MCF 10A (cell line): ENCODE measurements at regions of chr1 and their contacts with region 1.

Region 1: DNA sequence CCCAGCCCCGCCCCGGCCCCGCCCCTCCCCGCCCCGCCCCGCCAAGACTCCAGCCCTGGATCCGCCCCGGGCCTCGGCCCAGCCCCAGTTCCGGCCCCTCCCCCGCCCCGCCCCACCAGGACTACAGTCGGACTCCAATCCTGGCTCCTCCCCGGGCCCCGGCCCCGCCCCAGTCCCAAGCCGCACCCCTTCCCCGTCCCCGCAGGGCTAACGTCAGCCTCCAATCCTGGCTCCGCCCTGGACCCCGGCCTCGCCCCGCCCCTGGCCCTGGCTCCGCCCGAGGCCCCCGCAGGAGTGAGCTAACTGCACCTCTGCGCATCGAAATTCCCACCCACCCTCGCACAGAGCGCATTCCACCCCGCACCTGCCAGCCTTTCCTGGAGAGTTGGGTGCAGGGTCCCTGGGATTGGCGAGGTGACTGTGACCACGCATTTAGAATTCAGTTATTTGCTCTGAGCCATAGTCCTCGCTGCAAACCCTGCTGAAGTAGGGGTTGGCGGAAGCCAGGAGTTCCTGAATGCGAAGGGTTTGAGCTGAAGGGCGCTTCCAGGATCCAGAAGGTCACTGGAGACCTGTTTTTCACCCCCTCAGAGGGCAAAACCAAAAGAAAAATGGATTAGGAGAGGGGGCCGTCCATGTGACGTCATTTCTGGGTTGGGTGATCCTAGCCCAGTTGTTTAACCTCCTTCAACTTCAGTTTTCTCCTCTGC is 588 bp upstream of the IGSF8 start:
- DNase-seq: peak; percentile 96
- H3K4me3 Mint-ChIP-seq: peak overlapping the region; percentile 81
- H3K27ac Mint-ChIP-seq: no peak overlapping the region
- H3K4me1 Mint-ChIP-seq: peaks cover 36% of the 10 kb centered on the region
- H3K27me3 Mint-ChIP-seq: no peaks in the 10 kb centered on the region
- CTCF ChIP-seq: no peak

Region 2: GRCh38 chr1:160031365-160032164 is 67.4 kb before region 1 on chr1 and contains the start of gene PIGM:
- CTCF ChIA-PET with region 1: interaction called, 1,546 read pairs
- POLR2A ChIA-PET with region 1: interaction called, 70 read pairs
- intact Hi-C with region 1: no loop called
- DNase-seq: peak; percentile 99
- H3K4me3 Mint-ChIP-seq: peak within 1 kb of the TSS; percentile 80
- H3K27ac Mint-ChIP-seq: peak within 1 kb of the TSS; percentile 60
- H3K4me1 Mint-ChIP-seq: peaks cover 24% of the 10 kb centered on the region
- H3K27me3 Mint-ChIP-seq: no peaks in the 10 kb centered on the region
- CTCF ChIP-seq: no peak
- total RNA-seq, gene PIGM: 7.7 and 10.1 TPM in 2 replicates

Region 3: DNA sequence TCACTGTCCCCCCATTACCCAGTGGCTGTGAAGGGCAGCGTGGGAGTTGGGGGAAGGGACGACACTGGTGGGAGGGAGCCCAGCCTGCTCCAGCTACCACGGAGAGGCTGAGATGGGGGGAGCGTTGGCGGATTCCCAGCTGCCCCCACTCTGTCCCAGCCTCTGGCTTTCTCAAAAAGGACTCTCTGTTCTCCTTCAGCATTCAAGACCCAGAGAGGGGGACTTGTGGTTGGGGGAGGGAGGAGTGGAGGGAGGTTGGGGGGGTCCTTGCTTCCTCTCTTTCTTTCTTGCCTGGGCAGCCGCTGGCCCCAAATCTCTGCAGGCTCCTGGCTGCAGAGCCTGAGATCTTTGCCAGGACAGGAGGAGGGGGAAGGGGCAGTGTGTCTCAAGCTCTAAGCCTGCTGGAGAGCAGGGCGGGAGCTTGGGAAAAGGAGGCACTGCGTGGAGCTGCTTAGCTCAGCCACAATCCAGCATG is 18.7 kb after region 1 on chr1:
- CTCF ChIA-PET with region 1: interaction called, 69 read pairs
- POLR2A ChIA-PET with region 1: interaction called, 7 read pairs
- intact Hi-C with region 1: no loop called
- DNase-seq: peak; percentile 30
- H3K4me3 Mint-ChIP-seq: no peak overlapping the region
- H3K27ac Mint-ChIP-seq: no peak overlapping the region
- H3K4me1 Mint-ChIP-seq: peaks cover 8% of the 10 kb centered on the region
- H3K27me3 Mint-ChIP-seq: no peaks in the 10 kb centered on the region
- CTCF ChIP-seq: no peak

Region 4: DNA sequence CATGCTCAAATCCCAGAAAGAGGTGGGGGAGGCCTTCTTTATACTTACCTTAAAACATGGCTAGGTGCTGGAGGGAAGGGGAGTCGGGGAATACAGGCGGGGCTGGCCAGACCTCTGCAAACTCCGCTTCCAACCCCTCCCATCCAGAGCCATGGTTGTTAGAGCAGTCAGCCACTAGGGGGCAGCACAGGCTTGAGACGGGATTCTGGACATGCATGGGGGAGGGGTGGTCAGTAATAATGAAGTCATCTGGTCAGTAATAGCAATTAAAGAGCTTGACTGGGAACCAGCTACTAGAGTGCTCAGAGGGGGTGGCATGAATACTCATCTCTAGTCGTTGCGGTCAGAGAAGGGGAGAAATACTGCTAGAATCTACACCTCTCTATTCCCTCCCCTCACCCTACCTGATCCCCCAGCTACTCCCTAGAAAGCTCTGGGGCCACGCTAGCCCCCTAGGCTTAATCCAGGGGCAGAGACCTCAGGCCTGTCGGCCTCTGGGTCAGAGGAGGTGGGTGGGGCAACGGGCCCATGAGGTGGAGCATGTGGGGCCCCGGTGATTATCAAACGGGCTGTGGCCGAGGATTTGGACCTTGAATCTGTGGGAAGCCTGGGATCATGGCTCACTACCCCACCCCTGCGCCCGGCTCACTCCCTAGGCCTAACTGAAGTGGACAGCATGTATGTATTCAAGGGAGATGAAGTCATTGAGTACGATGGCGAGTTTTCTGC is 94.2 kb after region 1 on chr1:
- CTCF ChIA-PET with region 1: interaction called, 123 read pairs
- POLR2A ChIA-PET with region 1: interaction called, 5 read pairs
- intact Hi-C with region 1: loop called (anchors 1 kb)
- DNase-seq: peak; percentile 94
- H3K4me3 Mint-ChIP-seq: no peak overlapping the region
- H3K27ac Mint-ChIP-seq: no peak overlapping the region
- H3K4me1 Mint-ChIP-seq: no peaks in the 10 kb centered on the region
- H3K27me3 Mint-ChIP-seq: no peaks in the 10 kb centered on the region
- CTCF ChIP-seq: peak; percentile 100

Region 5: DNA sequence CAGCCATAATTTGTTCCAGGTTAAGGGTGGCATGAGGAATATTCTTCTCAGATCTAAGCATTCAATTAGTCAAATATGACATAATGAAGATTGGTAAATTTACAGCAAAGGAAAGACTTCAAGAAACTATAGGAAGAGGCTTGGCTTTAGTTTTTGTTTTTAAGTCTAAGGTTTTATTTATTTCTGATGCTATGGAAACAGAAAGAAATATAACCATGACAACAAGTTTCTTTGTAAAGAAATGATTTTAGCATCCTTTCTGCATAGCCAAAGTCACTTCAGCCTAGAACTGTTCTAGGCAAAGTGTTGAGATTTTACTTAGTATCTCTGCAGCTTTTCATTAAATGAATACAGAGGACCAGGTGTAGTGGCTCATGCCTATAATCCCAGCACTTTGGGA is 133.9 kb after region 1 on chr1:
- CTCF ChIA-PET with region 1: interaction called, 21 read pairs
- POLR2A ChIA-PET with region 1: no interaction called
- intact Hi-C with region 1: no loop called
- DNase-seq: no peak
- H3K4me3 Mint-ChIP-seq: no peak overlapping the region
- H3K27ac Mint-ChIP-seq: peak overlapping the region; percentile 0
- H3K4me1 Mint-ChIP-seq: no peaks in the 10 kb centered on the region
- H3K27me3 Mint-ChIP-seq: no peaks in the 10 kb centered on the region
- CTCF ChIP-seq: no peak

Region 6: GRCh38 chr1:160284782-160285344 is 185.9 kb after region 1 on chr1 and contains the start of gene PEX19:
- CTCF ChIA-PET with region 1: interaction called, 192 read pairs
- POLR2A ChIA-PET with region 1: interaction called, 23 read pairs
- intact Hi-C with region 1: no loop called
- DNase-seq: peak; percentile 97
- H3K4me3 Mint-ChIP-seq: peak within 1 kb of the TSS; percentile 100
- H3K27ac Mint-ChIP-seq: peak within 1 kb of the TSS; percentile 99
- H3K4me1 Mint-ChIP-seq: peaks cover 19% of the 10 kb centered on the region
- H3K27me3 Mint-ChIP-seq: no peaks in the 10 kb centered on the region
- CTCF ChIP-seq: no peak
- total RNA-seq, gene PEX19: 61.2 and 73.2 TPM in 2 replicates